IMR-90 (cell line): ENCODE measurements at regions of chr17 and their contacts with region 1.

Region 1: GRCh38 chr17:41738077-41738735 is 3.8 kb upstream of the HAP1 start:
- DNase-seq: peak; percentile 68
- ATAC-seq: peak; percentile 90
- H3K4me3 ChIP-seq: no peak overlapping the region
- H3K27ac ChIP-seq: no peak overlapping the region
- H3K4me1 ChIP-seq: peaks cover 5% of the 10 kb centered on the region; the same call in 1 of the 2 replicates
- H3K27me3 ChIP-seq: peaks cover 39% of the 10 kb centered on the region
- CTCF ChIP-seq: peak; percentile 99
- POLR2A ChIP-seq: peak; percentile 67
- RAD21 ChIP-seq: peak; percentile 99

Region 2: GRCh38 chr17:41688699-41689496 is 49.3 kb before region 1 on chr17 and contains the start of gene EIF1:
- CTCF ChIA-PET with region 1: no interaction called
- POLR2A ChIA-PET with region 1: interaction called, 10 read pairs
- dilution Hi-C with region 1: no loop called
- in situ Hi-C with region 1: no loop called
- intact Hi-C with region 1: no loop called
- DNase-seq: peak; percentile 99
- ATAC-seq: peak; percentile 83
- H3K4me3 ChIP-seq: peak within 1 kb of the TSS; percentile 75
- H3K27ac ChIP-seq: peak within 1 kb of the TSS; percentile 91
- H3K4me1 ChIP-seq: peaks cover 3% of the 10 kb centered on the region
- H3K27me3 ChIP-seq: no peaks in the 10 kb centered on the region
- CTCF ChIP-seq: no peak
- POLR2A ChIP-seq: peak; percentile 99
- RAD21 ChIP-seq: no peak
- total RNA-seq, gene EIF1: 89.4 and 102 TPM in 2 replicates

Region 3: GRCh38 chr17:41801374-41802271 is 63.4 kb after region 1 on chr17:
- CTCF ChIA-PET with region 1: interaction called, 8 read pairs
- POLR2A ChIA-PET with region 1: no interaction called
- dilution Hi-C with region 1: no loop called
- in situ Hi-C with region 1: loop called (anchors 5 kb)
- intact Hi-C with region 1: loop called (anchors 1 kb)
- DNase-seq: peak; percentile 72
- ATAC-seq: peak; percentile 93
- H3K4me3 ChIP-seq: no peak overlapping the region
- H3K27ac ChIP-seq: no peak overlapping the region
- H3K4me1 ChIP-seq: peaks cover 11% of the 10 kb centered on the region
- H3K27me3 ChIP-seq: no peaks in the 10 kb centered on the region
- CTCF ChIP-seq: peak; percentile 96
- POLR2A ChIP-seq: peak; percentile 41; the same call in 1 of the 2 replicates
- RAD21 ChIP-seq: peak; percentile 97

Region 4: GRCh38 chr17:41864836-41865595 is 126.8 kb after region 1 on chr17 and contains the start of gene KLHL11:
- CTCF ChIA-PET with region 1: no interaction called
- POLR2A ChIA-PET with region 1: no interaction called
- dilution Hi-C with region 1: no loop called
- in situ Hi-C with region 1: no loop called
- intact Hi-C with region 1: loop called (anchors 5 kb)
- DNase-seq: peak; percentile 85
- ATAC-seq: peak; percentile 95
- H3K4me3 ChIP-seq: peak within 1 kb of the TSS; percentile 83
- H3K27ac ChIP-seq: peak within 1 kb of the TSS; percentile 72
- H3K4me1 ChIP-seq: peaks cover 11% of the 10 kb centered on the region
- H3K27me3 ChIP-seq: no peaks in the 10 kb centered on the region
- CTCF ChIP-seq: no peak
- POLR2A ChIP-seq: peak; percentile 79
- RAD21 ChIP-seq: peak; percentile 10; the same call in 1 of the 2 replicates
- total RNA-seq, gene KLHL11: 38.5 and 43.6 TPM in 2 replicates

Region 5: GRCh38 chr17:41959336-41960095 is 221.3 kb after region 1 on chr17:
- CTCF ChIA-PET with region 1: no interaction called
- POLR2A ChIA-PET with region 1: no interaction called
- dilution Hi-C with region 1: no loop called
- in situ Hi-C with region 1: loop called (anchors 10 kb)
- intact Hi-C with region 1: loop called (anchors 1 kb)
- DNase-seq: peak; percentile 66
- ATAC-seq: peak; percentile 75
- H3K4me3 ChIP-seq: no peak overlapping the region
- H3K27ac ChIP-seq: no peak overlapping the region
- H3K4me1 ChIP-seq: peaks cover 12% of the 10 kb centered on the region
- H3K27me3 ChIP-seq: no peaks in the 10 kb centered on the region
- CTCF ChIP-seq: peak; percentile 56
- POLR2A ChIP-seq: no peak
- RAD21 ChIP-seq: peak; percentile 61

Region 6: DNA sequence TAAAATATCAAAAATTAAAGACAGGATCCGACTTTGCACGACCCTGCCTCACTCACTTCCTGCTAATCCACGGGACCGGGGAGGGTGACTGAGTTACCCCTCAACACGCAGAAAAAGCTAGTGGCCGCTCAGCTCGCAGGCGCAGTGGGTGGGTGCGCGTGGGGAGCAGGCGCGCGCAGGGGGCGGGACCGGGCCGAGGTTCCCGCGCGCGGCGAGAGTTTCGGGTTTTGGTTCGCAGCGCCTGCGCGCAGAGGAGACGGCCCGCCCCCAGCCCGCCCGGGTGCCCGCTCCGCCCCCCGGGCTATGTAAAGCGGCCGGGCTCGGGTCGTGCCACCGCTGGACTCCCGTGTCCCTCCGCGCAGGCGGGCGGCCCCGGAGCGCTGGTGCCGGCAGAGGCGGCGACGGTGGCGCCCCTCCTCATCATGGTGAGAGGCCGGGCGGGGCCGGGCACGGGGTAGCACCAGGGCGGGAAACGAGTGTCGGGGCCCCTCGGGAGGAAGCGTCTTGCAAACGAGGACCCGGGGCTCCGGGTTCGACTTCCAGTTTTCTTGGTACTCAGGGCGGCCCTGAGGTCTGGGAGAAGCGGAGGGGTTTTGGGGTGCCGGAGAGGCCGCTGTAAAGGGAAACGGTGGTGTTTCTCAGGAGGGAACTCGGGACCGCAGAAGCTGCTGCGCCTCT is 228.4 kb after region 1 on chr17 and contains the start of gene CNP:
- CTCF ChIA-PET with region 1: no interaction called
- POLR2A ChIA-PET with region 1: no interaction called
- dilution Hi-C with region 1: no loop called
- in situ Hi-C with region 1: loop called (anchors 10 kb)
- intact Hi-C with region 1: no loop called
- DNase-seq: peak; percentile 87
- ATAC-seq: peak; percentile 91
- H3K4me3 ChIP-seq: peak within 1 kb of the TSS; percentile 94
- H3K27ac ChIP-seq: peak within 1 kb of the TSS; percentile 81
- H3K4me1 ChIP-seq: peaks cover 11% of the 10 kb centered on the region
- H3K27me3 ChIP-seq: no peaks in the 10 kb centered on the region
- CTCF ChIP-seq: no peak
- POLR2A ChIP-seq: peak; percentile 89
- RAD21 ChIP-seq: no peak
- total RNA-seq, gene CNP: 45.5 and 50.3 TPM in 2 replicates